ENCODE measurements at regions of chrX and their contacts with region 1.

Region 1: DNA sequence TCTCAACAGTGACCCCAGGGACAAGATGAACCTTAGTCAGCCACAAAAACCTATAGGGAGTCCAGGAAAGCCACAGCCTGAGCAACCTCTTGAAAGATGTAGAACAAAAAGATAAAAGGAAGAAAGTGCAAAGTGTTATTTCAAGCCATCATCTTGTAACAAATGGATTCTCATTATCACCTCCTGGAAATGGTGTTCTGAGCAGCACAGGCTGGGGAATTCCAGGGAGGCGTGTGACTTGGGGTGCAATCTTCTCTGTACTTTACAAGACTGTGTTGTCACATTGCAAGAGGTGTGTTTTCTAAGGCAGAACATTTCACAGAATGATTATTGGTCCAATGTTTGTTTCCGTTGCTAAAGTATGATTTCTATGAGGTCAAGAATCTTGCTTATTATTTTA is 214.0 kb downstream of the DHRSX start:
- DNase-seq: no peak
- H3K4me3 ChIP-seq: no peak overlapping the region
- H3K27ac ChIP-seq: no peak overlapping the region
- H3K4me1 ChIP-seq: no peaks in the 10 kb centered on the region
- H3K27me3 ChIP-seq: no peaks in the 10 kb centered on the region
- CTCF ChIP-seq: no peak
- POLR2A ChIP-seq: no peak

Region 2: GRCh38 chrX:2589186-2590030 is 302.7 kb after region 1 on chrX:
- intact Hi-C with region 1: loop called (anchors 5 kb)
- DNase-seq: no peak
- H3K4me3 ChIP-seq: no peak overlapping the region
- H3K27ac ChIP-seq: no peak overlapping the region
- H3K4me1 ChIP-seq: no peaks in the 10 kb centered on the region
- H3K27me3 ChIP-seq: no peaks in the 10 kb centered on the region
- CTCF ChIP-seq: no peak
- POLR2A ChIP-seq: no peak

Region 3: GRCh38 chrX:2894885-2895292 is 608.2 kb after region 1 on chrX:
- intact Hi-C with region 1: no loop called
- DNase-seq: peak; percentile 56
- H3K4me3 ChIP-seq: no peak overlapping the region
- H3K27ac ChIP-seq: no peak overlapping the region
- H3K4me1 ChIP-seq: no peaks in the 10 kb centered on the region
- H3K27me3 ChIP-seq: no peaks in the 10 kb centered on the region
- CTCF ChIP-seq: no peak
- POLR2A ChIP-seq: no peak

Measured in prostate gland (tissue), 2 donors.